MCF 10A (cell line): ENCODE measurements at regions of chr5 and their contacts with region 1.

Region 1: DNA sequence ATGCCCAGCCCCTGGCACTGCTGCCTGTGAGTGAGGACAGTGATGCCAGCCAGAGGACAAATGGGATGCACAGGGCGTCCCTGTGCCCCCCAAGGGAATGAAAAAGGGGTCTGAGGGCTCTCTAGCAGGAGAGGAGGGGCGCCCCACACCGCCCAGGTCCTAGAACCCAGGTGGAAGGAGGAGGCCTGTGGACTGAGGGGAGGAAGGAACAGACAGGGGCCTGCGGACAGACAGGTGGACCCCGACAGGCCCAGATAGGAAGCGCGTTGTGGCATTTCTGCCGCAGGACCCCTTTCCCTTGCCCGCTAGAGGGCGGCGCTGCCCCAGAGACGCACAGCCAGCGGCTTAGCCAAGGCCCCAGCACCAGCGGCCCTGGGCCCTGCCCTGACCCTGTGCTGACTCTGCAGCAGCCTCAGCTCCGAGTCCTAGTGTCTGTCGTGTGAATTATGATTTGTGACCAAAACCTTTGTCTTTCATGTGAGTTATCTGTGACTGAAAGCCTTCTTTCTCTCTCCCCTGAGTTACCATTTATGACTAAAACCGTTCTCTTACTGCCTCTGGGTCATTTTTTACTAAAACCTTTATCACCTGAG is 30.7 kb downstream of the TRIP13 start:
- DNase-seq: peak; percentile 67
- H3K4me3 Mint-ChIP-seq: no peak overlapping the region
- H3K27ac Mint-ChIP-seq: no peak overlapping the region
- H3K4me1 Mint-ChIP-seq: no peaks in the 10 kb centered on the region
- H3K27me3 Mint-ChIP-seq: no peaks in the 10 kb centered on the region
- CTCF ChIP-seq: peak; percentile 83

Region 2: DNA sequence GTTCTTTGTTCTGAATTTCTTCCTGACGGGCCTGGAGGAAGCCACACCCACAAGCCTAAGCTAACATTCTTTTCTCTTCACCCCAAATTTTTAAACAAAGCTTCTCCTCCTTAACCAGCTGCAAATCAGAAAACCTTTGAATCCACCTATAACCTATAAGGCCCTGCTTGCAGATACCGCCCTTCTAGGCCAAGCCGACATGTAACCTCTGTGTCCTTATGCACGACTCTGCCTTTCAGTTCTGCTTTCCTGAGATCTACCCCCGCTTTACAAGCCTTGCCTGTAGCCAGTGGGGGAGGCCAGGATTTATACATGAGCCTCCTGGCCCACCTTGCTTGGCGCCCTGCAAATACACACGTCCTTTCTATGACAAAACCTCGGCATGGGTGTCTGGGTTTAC is 50.0 kb before region 1 on chr5:
- CTCF ChIA-PET with region 1: no interaction called
- POLR2A ChIA-PET with region 1: no interaction called
- intact Hi-C with region 1: no loop called
- DNase-seq: no peak
- H3K4me3 Mint-ChIP-seq: no peak overlapping the region
- H3K27ac Mint-ChIP-seq: no peak overlapping the region
- H3K4me1 Mint-ChIP-seq: no peaks in the 10 kb centered on the region
- H3K27me3 Mint-ChIP-seq: no peaks in the 10 kb centered on the region
- CTCF ChIP-seq: no peak

Region 3: DNA sequence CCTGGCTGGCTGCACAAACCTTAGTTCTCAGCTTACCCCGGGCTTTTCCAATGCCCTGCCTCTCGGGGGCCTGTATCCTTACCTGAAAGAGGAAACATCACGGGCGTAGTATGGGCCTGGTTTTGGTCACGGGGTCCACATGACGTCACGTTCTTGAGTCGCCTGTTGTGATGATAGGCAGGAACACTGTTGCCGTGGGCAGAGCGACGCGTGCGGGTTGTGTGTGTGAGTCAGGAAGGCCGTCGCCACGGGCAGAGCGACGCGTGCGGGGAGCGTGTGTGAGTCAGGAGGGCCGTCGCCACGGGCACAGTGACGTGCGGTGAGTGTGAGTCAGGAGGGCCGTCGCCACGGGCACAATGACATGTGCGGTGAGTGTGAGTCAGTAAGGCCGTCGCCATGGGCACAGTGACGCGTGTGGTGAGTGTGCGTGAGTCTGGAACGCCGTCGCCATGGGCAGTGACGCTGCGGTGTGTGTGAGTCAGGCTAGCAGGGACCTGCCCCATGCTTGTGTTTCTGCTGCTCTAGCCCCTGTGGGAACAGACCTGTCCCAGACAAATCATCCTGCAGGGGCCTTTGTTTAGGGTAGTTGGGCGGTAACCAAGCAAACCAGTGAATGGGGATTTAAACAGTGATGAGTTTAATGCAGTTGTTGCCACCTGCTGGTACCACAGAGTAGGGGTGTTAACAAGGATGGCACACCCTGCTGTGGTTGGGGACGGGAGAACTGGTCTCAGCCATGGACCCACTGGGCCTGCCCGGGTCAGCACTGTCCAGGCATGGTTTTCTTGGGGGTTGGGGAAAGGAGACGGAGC is 10.9 kb before region 1 on chr5:
- CTCF ChIA-PET with region 1: interaction called, 20 read pairs
- POLR2A ChIA-PET with region 1: no interaction called
- intact Hi-C with region 1: no loop called
- DNase-seq: peak; percentile 97
- H3K4me3 Mint-ChIP-seq: peak overlapping the region; percentile 61
- H3K27ac Mint-ChIP-seq: peak overlapping the region; percentile 99
- H3K4me1 Mint-ChIP-seq: peaks cover 43% of the 10 kb centered on the region
- H3K27me3 Mint-ChIP-seq: no peaks in the 10 kb centered on the region
- CTCF ChIP-seq: peak; percentile 37

Region 4: GRCh38 chr5:1011226-1011631 is 87.9 kb after region 1 on chr5:
- CTCF ChIA-PET with region 1: interaction called, 7 read pairs
- POLR2A ChIA-PET with region 1: no interaction called
- intact Hi-C with region 1: loop called (anchors 2 kb)
- DNase-seq: peak; percentile 46
- H3K4me3 Mint-ChIP-seq: no peak overlapping the region
- H3K27ac Mint-ChIP-seq: no peak overlapping the region
- H3K4me1 Mint-ChIP-seq: peaks cover 7% of the 10 kb centered on the region
- H3K27me3 Mint-ChIP-seq: peaks cover 53% of the 10 kb centered on the region
- CTCF ChIP-seq: peak; percentile 21

Region 5: DNA sequence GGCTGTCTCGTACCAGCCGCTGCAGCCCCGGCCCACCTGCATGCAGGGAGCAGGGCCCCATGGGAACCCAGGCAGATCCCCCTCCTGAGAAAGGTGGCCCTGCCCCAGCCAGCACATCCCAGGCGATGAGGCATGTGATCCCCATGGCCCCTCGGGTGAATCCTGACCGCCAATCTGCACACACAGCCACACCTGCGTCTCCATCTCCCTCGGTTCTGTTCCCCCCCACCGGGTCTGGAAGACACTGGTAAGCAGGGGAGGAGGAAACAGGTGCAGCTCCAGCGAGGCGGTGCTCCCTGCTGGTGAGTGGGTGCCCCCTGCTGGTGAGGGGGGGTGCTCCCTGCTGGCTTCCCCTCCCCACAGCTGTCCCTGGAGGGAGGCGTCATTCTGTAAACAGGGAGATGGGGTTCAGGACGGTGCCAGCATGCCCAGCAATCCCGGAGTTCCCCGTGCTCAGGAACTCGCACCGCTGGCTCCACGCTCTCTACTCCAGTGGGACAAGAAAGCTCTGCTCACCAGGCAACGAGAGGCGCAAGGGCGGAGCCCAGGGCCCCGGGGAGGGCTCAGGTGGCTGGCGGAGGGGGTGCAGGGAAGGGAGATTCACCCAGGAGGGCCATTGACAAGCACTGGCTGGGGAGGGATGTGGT is 216.9 kb after region 1 on chr5:
- CTCF ChIA-PET with region 1: interaction called, 8 read pairs
- POLR2A ChIA-PET with region 1: no interaction called
- intact Hi-C with region 1: loop called (anchors 1 kb)
- DNase-seq: peak; percentile 67
- H3K4me3 Mint-ChIP-seq: no peak overlapping the region
- H3K27ac Mint-ChIP-seq: no peak overlapping the region
- H3K4me1 Mint-ChIP-seq: no peaks in the 10 kb centered on the region
- H3K27me3 Mint-ChIP-seq: peaks cover 19% of the 10 kb centered on the region
- CTCF ChIP-seq: peak; percentile 62

Region 6: GRCh38 chr5:1167728-1168709 is 244.6 kb after region 1 on chr5:
- CTCF ChIA-PET with region 1: interaction called, 51 read pairs
- POLR2A ChIA-PET with region 1: interaction called, 3 read pairs
- intact Hi-C with region 1: loop called (anchors 1 kb)
- DNase-seq: peak; percentile 75
- H3K4me3 Mint-ChIP-seq: peak overlapping the region; percentile 50
- H3K27ac Mint-ChIP-seq: no peak overlapping the region
- H3K4me1 Mint-ChIP-seq: peaks cover 8% of the 10 kb centered on the region
- H3K27me3 Mint-ChIP-seq: peaks cover 12% of the 10 kb centered on the region
- CTCF ChIP-seq: peak; percentile 75

Region 7: DNA sequence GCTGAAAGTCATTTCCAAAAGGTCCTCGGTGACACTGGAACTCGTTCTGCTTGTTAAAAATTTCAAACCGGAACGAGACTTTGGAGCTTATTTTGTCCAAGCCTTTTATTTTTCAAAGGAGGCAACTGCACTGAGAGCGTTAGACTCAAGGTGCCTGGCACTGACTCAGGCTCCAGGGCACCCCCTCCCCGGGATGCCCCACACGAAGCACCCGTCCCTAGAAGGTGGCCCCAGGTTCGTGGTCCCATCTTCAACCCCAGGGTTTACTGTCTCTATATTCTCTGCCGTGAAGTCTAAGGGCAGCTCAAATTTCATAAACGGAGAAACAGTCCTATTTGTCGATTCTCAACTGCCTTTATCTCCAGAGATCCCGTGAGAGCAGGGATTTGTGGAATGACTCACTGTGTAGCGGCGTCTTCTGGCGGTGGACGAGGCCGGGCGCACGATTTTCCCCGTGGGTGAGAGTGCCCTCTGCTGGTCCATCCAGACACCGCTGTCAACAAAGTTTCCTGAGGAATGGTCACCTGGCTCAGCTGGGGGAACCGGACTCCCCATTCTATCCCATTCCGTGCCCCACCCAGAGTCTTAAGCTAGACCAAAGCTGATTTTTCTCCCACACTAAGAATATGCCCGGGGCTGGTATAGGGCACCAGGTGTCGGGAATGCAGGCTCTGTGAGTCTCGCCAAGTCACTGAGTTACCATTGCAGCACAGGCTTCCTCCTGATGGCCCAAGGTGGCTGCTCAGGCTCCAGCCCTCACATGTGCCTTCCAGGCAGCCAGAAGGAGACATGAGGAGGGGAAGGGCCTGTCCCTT is 251.0 kb after region 1 on chr5:
- CTCF ChIA-PET with region 1: interaction called, 34 read pairs
- POLR2A ChIA-PET with region 1: no interaction called
- intact Hi-C with region 1: no loop called
- DNase-seq: peak; percentile 82
- H3K4me3 Mint-ChIP-seq: no peak overlapping the region
- H3K27ac Mint-ChIP-seq: no peak overlapping the region
- H3K4me1 Mint-ChIP-seq: no peaks in the 10 kb centered on the region
- H3K27me3 Mint-ChIP-seq: peaks cover 12% of the 10 kb centered on the region
- CTCF ChIP-seq: peak; percentile 73

Region 8: GRCh38 chr5:1641560-1642166 is 718.3 kb after region 1 on chr5:
- CTCF ChIA-PET with region 1: interaction called, 14 read pairs
- POLR2A ChIA-PET with region 1: no interaction called
- intact Hi-C with region 1: no loop called
- DNase-seq: peak; percentile 77
- H3K4me3 Mint-ChIP-seq: no peak overlapping the region
- H3K27ac Mint-ChIP-seq: no peak overlapping the region
- H3K4me1 Mint-ChIP-seq: no peaks in the 10 kb centered on the region
- H3K27me3 Mint-ChIP-seq: peaks cover 44% of the 10 kb centered on the region
- CTCF ChIP-seq: peak; percentile 90